ENCODE measurements at regions of chr16 and their contacts with region 1.

Region 1: GRCh38 chr16:23296994-23297393 is 5.1 kb upstream of the SCNN1B start:
- DNase-seq: no peak
- ATAC-seq: peak; percentile 82
- H3K4me3 ChIP-seq: no peak overlapping the region
- H3K27ac ChIP-seq: no peak overlapping the region
- H3K4me1 ChIP-seq: no peaks in the 10 kb centered on the region
- H3K27me3 ChIP-seq: no peaks in the 10 kb centered on the region; the same call in 1 of the 2 replicates
- CTCF ChIP-seq: peak; percentile 40

Region 2: GRCh38 chr16:23227529-23227928 is 69.5 kb before region 1 on chr16:
- CTCF ChIA-PET with region 1: interaction called, 5 read pairs
- POLR2A ChIA-PET with region 1: interaction called, 13 read pairs
- in situ Hi-C with region 1: no loop called
- intact Hi-C with region 1: no loop called
- DNase-seq: no peak
- ATAC-seq: no peak
- H3K4me3 ChIP-seq: no peak overlapping the region
- H3K27ac ChIP-seq: no peak overlapping the region
- H3K4me1 ChIP-seq: no peaks in the 10 kb centered on the region
- H3K27me3 ChIP-seq: no peaks in the 10 kb centered on the region
- CTCF ChIP-seq: no peak

Region 3: GRCh38 chr16:23423496-23424049 is 126.6 kb after region 1 on chr16:
- CTCF ChIA-PET with region 1: no interaction called
- POLR2A ChIA-PET with region 1: no interaction called
- in situ Hi-C with region 1: no loop called
- intact Hi-C with region 1: no loop called
- DNase-seq: peak; percentile 86
- ATAC-seq: peak; percentile 97
- H3K4me3 ChIP-seq: peak overlapping the region in 1 of 2 experiments; percentile 11; a peak in 1 of 4 replicates
- H3K27ac ChIP-seq: peak overlapping the region; percentile 84
- H3K4me1 ChIP-seq: peaks cover 34% of the 10 kb centered on the region
- H3K27me3 ChIP-seq: no peaks in the 10 kb centered on the region
- CTCF ChIP-seq: no peak